Endothelial cell of umbilical vein (primary cell): ENCODE measurements at regions of chr22 and their contacts with region 1.

Region 1: GRCh38 chr22:38973289-38974169 is 8.6 kb upstream of the APOBEC3B start:
- DNase-seq: peak; percentile 46
- H3K4me3 ChIP-seq: no peak overlapping the region
- H3K27ac ChIP-seq: no peak overlapping the region
- H3K4me1 ChIP-seq: no peaks in the 10 kb centered on the region
- H3K27me3 ChIP-seq: no peaks in the 10 kb centered on the region
- CTCF ChIP-seq: peak; percentile 74 to 83
- POLR2A ChIP-seq: no peak

Region 2: GRCh38 chr22:38467904-38468758 is 505.4 kb before region 1 on chr22 and contains the start of gene KDELR3:
- CTCF ChIA-PET with region 1: no interaction called
- POLR2A ChIA-PET with region 1: no interaction called
- dilution Hi-C with region 1: no loop called
- intact Hi-C with region 1: no loop called
- DNase-seq: peak; percentile 55
- H3K4me3 ChIP-seq: peak within 1 kb of the TSS; percentile 49 to 74 (median 57)
- H3K27ac ChIP-seq: peak within 1 kb of the TSS; percentile 55
- H3K4me1 ChIP-seq: peaks cover 13% of the 10 kb centered on the region
- H3K27me3 ChIP-seq: peaks cover 1 to 2% of the 10 kb centered on the region in 2 experiments
- CTCF ChIP-seq: peak; percentile 18 to 35
- POLR2A ChIP-seq: peak; percentile 76
- total RNA-seq, gene KDELR3: 28.6 and 40.2 TPM in 2 replicates

Region 3: GRCh38 chr22:38890377-38890776 is 83.2 kb before region 1 on chr22:
- CTCF ChIA-PET with region 1: no interaction called
- POLR2A ChIA-PET with region 1: no interaction called
- dilution Hi-C with region 1: no loop called
- intact Hi-C with region 1: no loop called
- DNase-seq: no peak
- H3K4me3 ChIP-seq: no peak overlapping the region
- H3K27ac ChIP-seq: no peak overlapping the region
- H3K4me1 ChIP-seq: no peaks in the 10 kb centered on the region
- H3K27me3 ChIP-seq: peaks cover 7 to 18% of the 10 kb centered on the region in 2 experiments
- CTCF ChIP-seq: no peak
- POLR2A ChIP-seq: no peak

Region 4: DNA sequence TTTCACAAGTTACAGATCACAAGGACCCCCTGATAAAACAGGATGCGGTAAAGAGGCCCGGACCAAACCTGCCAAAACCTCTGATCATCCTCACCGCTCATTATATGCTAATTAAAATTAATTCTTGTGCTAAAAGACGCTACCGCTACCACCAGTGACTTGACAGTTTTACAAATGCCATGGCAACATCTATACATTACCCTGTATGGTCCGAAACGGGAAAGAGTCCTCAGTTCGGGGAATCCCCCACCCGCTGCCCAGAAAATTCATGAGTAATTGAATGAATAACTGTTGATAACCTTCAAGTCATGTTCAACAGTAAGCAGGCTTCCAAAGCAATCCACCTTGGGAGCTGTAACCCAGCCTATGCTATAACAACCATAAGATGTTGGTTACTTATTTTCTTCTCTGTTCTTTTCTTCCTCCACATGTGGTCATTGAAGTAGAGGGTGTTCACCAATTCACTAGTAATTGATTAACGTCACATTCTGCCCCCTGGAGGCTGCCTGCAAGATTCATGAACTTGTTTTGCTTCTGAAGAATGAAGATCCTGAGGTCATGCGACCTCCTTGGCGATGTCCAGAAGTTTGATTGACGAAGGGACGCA is 144.2 kb after region 1 on chr22:
- CTCF ChIA-PET with region 1: interaction called, 22 read pairs
- POLR2A ChIA-PET with region 1: no interaction called
- dilution Hi-C with region 1: no loop called
- intact Hi-C with region 1: loop called (anchors 1 kb)
- DNase-seq: peak; percentile 57
- H3K4me3 ChIP-seq: no peak overlapping the region
- H3K27ac ChIP-seq: no peak overlapping the region
- H3K4me1 ChIP-seq: no peaks in the 10 kb centered on the region
- H3K27me3 ChIP-seq: peaks cover 18 to 29% of the 10 kb centered on the region in 2 experiments
- CTCF ChIP-seq: peak; percentile 36 to 51
- POLR2A ChIP-seq: no peak

Region 5: GRCh38 chr22:39123751-39124601 is 150.4 kb after region 1 on chr22:
- CTCF ChIA-PET with region 1: interaction called, 22 read pairs
- POLR2A ChIA-PET with region 1: no interaction called
- dilution Hi-C with region 1: no loop called
- intact Hi-C with region 1: no loop called
- DNase-seq: no peak
- H3K4me3 ChIP-seq: no peak overlapping the region
- H3K27ac ChIP-seq: no peak overlapping the region
- H3K4me1 ChIP-seq: no peaks in the 10 kb centered on the region
- H3K27me3 ChIP-seq: peaks cover 3 to 4% of the 10 kb centered on the region in 2 experiments
- CTCF ChIP-seq: no peak
- POLR2A ChIP-seq: no peak

Region 6: DNA sequence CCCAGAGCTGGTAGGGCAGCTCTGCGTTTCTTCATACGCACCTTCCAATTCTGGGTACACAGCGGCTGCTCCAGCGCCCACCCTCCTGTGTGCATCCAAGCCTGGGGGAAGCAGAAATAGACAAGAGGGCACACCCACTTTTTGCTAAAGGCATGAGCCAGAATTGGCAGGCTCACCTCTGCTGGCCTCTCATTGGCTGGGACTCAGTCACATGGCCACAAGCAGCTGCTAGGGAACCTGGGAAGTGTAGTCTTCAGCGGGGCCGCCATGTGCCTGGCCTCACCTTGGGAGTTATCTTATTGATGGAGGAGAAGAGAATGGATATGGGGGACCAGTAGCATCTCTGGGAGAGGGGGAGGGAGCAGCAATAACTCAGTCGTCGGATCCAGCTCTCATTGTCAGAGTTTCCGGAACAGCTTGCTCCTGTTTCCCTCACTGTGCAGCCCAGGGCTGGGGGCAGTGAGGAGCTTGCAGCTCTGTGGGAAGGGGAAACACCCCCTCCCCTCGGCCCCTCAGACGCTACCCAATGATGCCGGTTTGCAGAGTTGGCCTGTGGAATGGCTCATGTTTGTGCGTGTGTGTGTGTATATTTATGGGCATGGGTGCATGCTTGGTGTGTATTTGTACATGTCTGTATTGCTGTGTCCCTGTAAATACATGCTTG is 516.7 kb after region 1 on chr22:
- CTCF ChIA-PET with region 1: no interaction called
- POLR2A ChIA-PET with region 1: no interaction called
- dilution Hi-C with region 1: no loop called
- intact Hi-C with region 1: no loop called
- DNase-seq: peak; percentile 60
- H3K4me3 ChIP-seq: no peak overlapping the region
- H3K27ac ChIP-seq: no peak overlapping the region
- H3K4me1 ChIP-seq: no peaks in the 10 kb centered on the region
- H3K27me3 ChIP-seq: no peaks in the 10 kb centered on the region
- CTCF ChIP-seq: no peak
- POLR2A ChIP-seq: no peak